A549 (cell line): ENCODE measurements at regions of chr5 and their contacts with region 1.

Region 1: GRCh38 chr5:139968547-139969261 is 74.4 kb downstream of the NRG2 start:
- DNase-seq: peak; percentile 81 to 90
- ATAC-seq: peak; percentile 97 to 99
- H3K4me3 ChIP-seq: no peak overlapping the region
- H3K27ac ChIP-seq: no peak overlapping the region
- H3K4me1 ChIP-seq: no peaks in the 10 kb centered on the region
- CTCF ChIP-seq: peak; percentile 98
- EP300 ChIP-seq: no peak
- POLR2A ChIP-seq: no peak
- RAD21 ChIP-seq: peak; percentile 90 to 94

Region 2: GRCh38 chr5:139611703-139612584 is 356.8 kb before region 1 on chr5:
- CTCF ChIA-PET with region 1: no interaction called
- POLR2A ChIA-PET with region 1: no interaction called
- DNase-seq: no peak
- ATAC-seq: peak in 1 of 2 experiments; percentile 34; a peak in 2 of 6 replicates
- H3K4me3 ChIP-seq: no peak overlapping the region
- H3K27ac ChIP-seq: no peak overlapping the region
- H3K4me1 ChIP-seq: no peaks in the 10 kb centered on the region
- CTCF ChIP-seq: no peak
- EP300 ChIP-seq: no peak
- POLR2A ChIP-seq: no peak
- RAD21 ChIP-seq: no peak

Region 3: DNA sequence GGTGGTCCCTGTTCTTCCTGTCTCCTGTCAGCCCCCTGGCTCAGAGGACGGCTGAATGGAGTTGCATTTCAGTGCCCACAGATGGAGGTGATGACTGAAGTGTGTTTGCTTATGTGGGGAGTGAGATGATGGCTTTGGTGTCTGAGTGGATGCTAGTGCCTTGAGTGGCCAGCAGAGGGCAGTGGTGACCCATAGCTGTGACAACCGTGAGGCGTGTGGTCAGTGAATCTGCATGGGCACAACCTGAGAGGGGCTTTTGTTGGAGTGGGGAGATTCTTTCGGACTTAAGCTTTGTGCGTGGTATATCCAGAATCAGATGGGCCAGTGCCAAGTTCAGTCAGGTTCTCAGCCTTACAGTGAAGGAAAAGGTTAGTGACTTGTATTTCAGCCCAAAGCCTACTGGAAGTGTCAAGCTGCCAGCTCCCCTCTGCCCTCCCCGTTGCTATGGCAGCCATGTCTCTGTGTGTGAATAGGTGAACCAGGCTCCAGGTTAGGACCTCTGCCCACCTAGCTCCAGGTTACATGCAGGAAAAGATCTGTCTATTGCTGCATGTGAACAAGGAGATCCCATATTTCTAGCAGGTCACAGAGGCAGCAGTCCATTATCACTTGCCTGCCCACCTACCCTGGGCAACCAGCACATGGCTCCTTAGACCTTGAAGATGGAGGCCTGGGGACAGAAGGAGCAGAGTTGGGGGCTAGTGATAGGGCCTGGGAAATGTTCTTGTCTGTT is 335.2 kb before region 1 on chr5:
- CTCF ChIA-PET with region 1: interaction called, 12 read pairs
- POLR2A ChIA-PET with region 1: no interaction called
- DNase-seq: peak; percentile 77 to 79
- ATAC-seq: peak; percentile 70 to 80
- H3K4me3 ChIP-seq: no peak overlapping the region
- H3K27ac ChIP-seq: peak overlapping the region in 1 of 2 experiments; percentile 51; a peak in 3 of 6 replicates
- H3K4me1 ChIP-seq: peaks cover 38% of the 10 kb centered on the region
- CTCF ChIP-seq: peak; percentile 95
- EP300 ChIP-seq: no peak
- POLR2A ChIP-seq: no peak
- RAD21 ChIP-seq: peak; percentile 94 to 95

Region 4: DNA sequence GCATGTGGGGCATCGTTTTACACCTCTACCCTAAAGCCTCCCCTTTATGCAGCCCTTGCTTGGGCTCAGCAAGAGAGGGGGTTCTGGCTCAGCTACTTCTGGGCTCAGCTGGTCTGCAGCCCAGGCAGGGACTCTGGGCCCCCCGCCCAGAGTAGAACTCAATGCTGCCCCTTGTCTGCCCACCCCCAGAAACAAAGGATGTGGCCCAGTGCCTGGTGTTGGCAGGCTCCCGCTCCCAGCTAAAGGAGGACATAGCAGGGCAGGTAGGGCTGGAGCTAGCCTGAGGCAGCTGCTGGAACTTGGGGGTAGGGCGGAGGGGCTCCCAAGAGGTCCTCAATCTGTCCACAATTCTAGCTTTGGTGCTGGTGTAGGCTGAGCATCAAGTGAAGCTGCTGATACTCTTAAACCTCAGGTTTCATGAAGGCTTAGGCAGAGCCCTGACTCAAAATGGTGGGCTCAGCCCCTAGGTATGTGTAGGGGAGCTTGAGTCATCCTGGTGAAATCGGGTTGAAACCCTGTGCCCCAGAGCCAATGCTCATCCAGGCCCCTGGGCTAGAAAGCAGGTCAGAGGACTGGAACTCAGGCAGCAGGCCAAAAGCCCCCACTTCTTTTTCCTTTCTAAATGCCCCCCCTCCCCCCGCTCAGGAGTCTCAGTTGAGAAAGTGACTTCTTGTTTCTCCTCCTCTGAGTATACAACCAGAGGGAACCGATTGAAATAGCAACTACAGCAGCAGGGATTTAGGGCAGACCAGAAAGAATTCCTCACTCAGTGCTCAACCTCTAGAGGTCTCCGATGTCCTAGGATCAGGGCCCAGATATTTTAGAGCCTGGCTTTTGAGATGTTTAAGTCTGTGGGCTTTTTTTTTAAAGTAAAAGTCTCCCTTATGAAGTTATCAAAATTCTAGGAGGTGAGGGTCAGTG is 161.7 kb before region 1 on chr5:
- CTCF ChIA-PET with region 1: interaction called, 20 read pairs
- POLR2A ChIA-PET with region 1: no interaction called
- DNase-seq: no peak
- ATAC-seq: 0 out of 6 replicates have a peak, but pooled peaks of 1 of the 2 experiments have one; percentile 10
- H3K4me3 ChIP-seq: no peak overlapping the region
- H3K27ac ChIP-seq: no peak overlapping the region
- H3K4me1 ChIP-seq: no peaks in the 10 kb centered on the region
- CTCF ChIP-seq: no peak
- EP300 ChIP-seq: no peak
- POLR2A ChIP-seq: no peak
- RAD21 ChIP-seq: no peak

Region 5: GRCh38 chr5:139872052-139872766 is 96.5 kb before region 1 on chr5:
- CTCF ChIA-PET with region 1: interaction called, 22 read pairs
- POLR2A ChIA-PET with region 1: no interaction called
- DNase-seq: no peak
- ATAC-seq: peak in 1 of 2 experiments; percentile 43; a peak in 2 of 6 replicates
- H3K4me3 ChIP-seq: no peak overlapping the region
- H3K27ac ChIP-seq: no peak overlapping the region
- H3K4me1 ChIP-seq: 0 out of 3 replicates have a peak, but pooled peaks cover 3% of the 10 kb centered on the region
- CTCF ChIP-seq: no peak
- EP300 ChIP-seq: no peak
- POLR2A ChIP-seq: no peak
- RAD21 ChIP-seq: no peak

Region 6: DNA sequence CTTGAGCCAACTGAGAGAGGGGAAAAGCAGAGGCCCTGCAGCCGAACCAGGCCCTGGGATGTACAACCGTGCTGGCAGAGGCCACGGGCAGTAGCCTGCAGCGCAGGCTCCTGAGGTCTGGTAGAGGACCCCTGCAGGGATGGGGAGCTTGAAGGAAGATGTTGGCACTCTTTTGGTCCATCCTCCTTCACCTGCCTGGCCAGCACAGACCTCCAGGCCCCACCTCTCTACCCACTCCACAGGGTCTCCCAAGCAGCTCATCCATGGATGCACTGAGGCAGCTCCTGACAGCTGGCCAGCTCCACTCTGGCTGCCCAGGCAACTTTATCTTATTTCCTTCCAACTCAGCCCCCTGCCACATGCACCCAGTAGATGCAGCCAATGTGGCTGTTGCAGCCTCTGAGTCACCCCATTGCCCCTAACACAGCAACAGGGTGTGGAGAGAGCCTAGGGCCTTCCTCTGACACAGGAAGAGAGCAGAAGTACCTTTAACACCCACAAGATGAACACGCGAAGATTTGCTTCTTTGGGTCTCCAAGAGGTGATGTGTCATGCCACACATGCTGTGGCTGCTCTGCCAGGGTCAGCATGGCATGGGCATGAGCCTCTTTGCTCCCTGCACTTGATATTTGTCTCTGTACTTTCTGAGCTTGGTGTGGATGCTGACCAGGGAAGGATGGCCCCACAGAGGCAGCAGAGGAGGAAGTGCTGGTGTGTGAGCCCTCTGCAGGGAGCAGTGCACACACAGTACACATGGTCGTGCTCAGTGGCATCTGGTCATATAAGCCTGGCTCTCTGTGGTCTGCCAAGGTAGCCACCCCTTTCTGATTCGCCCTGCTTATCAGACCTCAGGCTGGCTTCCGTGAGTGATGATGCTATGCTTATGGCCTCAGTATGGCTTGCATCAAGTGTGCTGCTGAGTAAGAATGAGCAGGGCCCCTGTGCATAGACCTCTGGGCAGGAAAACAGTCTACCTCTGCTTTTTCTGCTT is 42.8 kb before region 1 on chr5:
- CTCF ChIA-PET with region 1: interaction called, 15 read pairs
- POLR2A ChIA-PET with region 1: no interaction called
- DNase-seq: no peak
- ATAC-seq: peak; percentile 39 to 46; a peak in 5 of 6 replicates
- H3K4me3 ChIP-seq: no peak overlapping the region
- H3K27ac ChIP-seq: no peak overlapping the region
- H3K4me1 ChIP-seq: no peaks in the 10 kb centered on the region
- CTCF ChIP-seq: no peak
- EP300 ChIP-seq: no peak
- POLR2A ChIP-seq: no peak
- RAD21 ChIP-seq: no peak

Region 7: GRCh38 chr5:139985733-139986132 is 17.0 kb after region 1 on chr5:
- CTCF ChIA-PET with region 1: interaction called, 67 read pairs
- POLR2A ChIA-PET with region 1: no interaction called
- DNase-seq: peak; percentile 18 to 31
- ATAC-seq: peak; percentile 71 to 78
- H3K4me3 ChIP-seq: no peak overlapping the region
- H3K27ac ChIP-seq: no peak overlapping the region
- H3K4me1 ChIP-seq: no peaks in the 10 kb centered on the region
- CTCF ChIP-seq: no peak
- EP300 ChIP-seq: no peak
- POLR2A ChIP-seq: no peak
- RAD21 ChIP-seq: no peak